Left cardiac atrium (tissue), 4 donors: ENCODE measurements at regions of chr1 and their contacts with region 1.

Region 1: DNA sequence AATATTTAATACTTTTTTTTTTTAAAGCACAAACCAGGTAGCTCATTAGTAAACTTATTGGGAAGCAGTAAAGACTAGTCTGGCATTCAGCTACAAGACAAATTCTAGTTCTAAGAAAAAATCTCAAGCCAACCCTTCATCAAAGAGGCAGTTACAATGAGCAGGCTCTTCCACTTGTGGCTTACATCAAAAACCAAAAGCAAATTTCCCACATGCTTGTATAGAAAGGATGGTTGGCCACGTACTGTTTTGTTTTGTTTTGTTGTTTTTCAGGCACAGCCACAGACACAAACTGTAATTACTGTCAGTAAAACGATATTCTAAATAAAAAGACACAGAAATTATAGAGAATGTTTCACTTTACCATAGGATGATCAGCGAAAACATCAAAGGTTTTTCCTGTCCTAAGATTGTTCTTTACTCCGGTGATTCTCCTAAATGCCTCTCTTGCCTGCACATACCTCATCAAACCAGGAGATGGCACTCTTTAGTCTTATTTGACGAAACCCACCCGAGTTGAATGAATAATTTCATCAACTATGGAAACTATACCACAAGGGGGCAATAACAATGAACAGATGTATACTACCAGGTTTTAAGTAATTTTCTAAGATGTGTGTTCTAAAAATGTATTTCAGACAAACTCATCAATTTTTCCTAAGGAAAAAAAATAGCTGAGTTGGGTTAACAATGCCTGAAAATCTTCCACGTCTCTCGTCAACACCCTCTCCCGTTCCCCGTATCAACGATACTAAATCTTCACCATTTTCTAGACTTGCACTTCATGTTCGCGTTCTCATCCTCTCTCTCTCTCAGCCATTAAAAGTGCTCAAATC is 26.9 kb downstream of the RPL5 start:
- DNase-seq: no peak
- ATAC-seq: peak; percentile 82 to 83

Region 2: DNA sequence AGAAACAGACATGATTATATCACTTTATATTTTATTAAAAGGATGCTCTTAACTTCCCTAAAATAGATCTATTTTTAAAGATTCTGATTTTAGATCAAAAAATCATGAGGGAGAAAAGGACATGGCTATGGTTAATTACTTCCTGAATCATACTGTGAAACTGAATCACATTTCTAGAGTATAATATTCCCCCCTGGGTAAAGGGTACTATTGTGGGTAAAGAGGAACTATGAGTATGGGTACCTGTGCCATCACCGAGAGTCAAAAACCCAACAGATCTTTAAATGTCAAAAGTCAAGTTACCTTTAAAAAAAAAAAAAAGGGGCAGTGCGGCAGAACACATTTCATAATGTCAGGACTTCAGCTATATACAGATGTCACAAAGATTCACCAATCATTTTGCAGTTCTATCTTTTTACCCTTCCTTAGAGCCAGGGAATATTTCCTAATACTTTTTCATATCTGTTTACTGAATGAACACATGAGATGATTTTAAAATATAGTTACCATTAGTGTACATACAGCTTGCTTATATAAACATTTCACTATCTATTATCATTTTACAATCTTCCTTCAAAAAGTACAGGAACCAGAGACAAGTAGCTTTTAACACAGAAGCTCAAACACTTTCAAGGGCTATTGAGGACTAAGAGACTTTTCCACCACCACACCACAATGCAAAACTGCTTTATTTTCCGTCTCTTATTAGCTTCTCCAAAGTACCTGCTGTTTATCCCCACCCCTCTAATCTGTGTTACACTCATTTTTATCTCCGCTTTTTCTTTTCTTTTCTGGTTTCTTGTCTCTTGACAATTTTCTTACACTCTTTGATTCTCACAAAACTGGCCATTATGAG is 118.9 kb before region 1 on chr1:
- intact Hi-C with region 1: no loop called
- DNase-seq: no peak
- ATAC-seq: no peak

Region 3: DNA sequence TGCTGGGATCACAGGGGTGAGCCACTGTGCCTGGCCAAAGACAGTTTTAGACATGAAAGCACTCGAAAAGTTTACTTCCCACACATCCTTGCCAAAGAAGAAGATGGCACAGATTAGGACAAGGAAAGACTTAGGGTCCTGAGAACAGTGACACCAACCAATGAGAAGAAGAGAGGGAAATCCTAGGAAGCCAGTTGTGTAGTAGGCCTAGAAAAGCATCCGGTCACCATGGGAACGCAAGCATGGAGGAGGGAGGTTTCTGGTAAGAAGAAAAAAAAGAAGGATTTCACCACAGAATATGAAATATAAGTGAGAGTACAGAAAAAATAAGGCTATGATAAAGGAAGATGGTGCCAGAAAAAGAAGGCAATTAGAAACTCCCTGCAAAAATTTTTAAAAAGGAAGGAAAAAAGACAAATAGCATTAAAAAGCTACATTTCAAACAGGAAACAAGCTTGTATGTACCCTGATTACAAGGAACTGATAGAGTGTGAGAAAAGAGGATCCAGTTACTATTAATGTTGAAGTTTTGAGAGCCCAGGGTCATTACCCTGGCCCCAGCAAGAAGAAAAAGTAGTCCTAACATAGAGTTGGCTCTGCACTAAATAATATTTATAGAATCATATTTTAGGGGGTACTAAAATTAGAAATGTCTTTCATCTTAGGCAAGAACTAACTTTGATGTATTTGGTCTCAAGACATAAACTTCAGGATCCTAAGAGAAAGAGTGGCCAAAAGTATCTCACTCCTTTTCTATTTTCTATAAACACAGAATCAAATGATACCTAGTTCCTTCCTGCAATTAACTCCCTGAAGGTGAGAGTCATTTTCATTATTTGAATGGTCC is 86.3 kb after region 1 on chr1:
- intact Hi-C with region 1: no loop called
- DNase-seq: no peak
- ATAC-seq: no peak

Region 4: GRCh38 chr1:92960395-92961130 is 101.8 kb after region 1 on chr1:
- intact Hi-C with region 1: loop called in 1 of 2 experiments (anchors 10 kb)
- DNase-seq: peak; percentile 57
- ATAC-seq: peak; percentile 65 to 73

Region 5: DNA sequence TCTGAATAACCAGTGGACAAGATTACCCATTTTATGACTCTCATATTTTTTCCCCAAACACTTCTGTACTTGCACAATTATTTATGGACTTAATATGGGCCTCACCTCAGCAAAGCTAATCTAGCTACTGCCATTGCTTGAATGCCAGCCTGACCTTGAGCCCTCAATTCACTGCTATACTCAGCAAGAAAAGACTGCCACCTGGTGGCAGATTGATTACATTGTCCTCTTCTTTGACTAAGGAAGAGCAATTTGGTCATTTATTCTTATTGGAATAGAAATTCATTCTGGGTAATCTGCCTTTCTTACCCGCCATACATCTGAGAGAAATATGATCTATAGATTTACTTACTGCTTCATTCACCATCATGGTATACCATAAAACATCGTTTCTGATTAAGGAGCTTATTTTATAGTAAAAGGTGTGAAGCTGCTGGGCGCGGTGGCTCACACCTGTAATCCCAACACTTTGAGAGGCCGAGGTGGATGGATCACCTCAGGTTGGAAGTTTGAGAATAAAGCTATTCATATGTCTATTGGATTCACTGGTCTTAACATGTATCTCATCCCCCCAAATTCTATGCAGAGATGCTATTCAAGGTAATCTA is 135.4 kb after region 1 on chr1:
- intact Hi-C with region 1: loop called (anchors 1 to 2 kb)
- DNase-seq: peak; percentile 72
- ATAC-seq: peak; percentile 91 to 96

Region 6: GRCh38 chr1:93061895-93062792 is 203.4 kb after region 1 on chr1:
- intact Hi-C with region 1: loop called in 1 of 2 experiments (anchors 2 kb)
- DNase-seq: peak; percentile 25
- ATAC-seq: peak in 1 of 2 donors; percentile 61